Mucosa of descending colon (tissue), 3 donors: ENCODE measurements at regions of chr14 and their contacts with region 1.

Region 1: GRCh38 chr14:75147423-75148071 is 20.7 kb upstream of the NEK9 start:
- DNase-seq: peak in 2 of 3 donors; percentile 63 to 65
- ATAC-seq: peak; percentile 63
- H3K4me3 ChIP-seq: no peak overlapping the region
- H3K4me1 ChIP-seq: peaks cover 5% of the 10 kb centered on the region
- CTCF ChIP-seq: peak; percentile 7

Region 2: GRCh38 chr14:75182841-75183624 is 35.5 kb after region 1 on chr14:
- intact Hi-C with region 1: no loop called
- DNase-seq: no peak
- ATAC-seq: no peak
- H3K4me3 ChIP-seq: no peak overlapping the region
- H3K4me1 ChIP-seq: peaks cover 18% of the 10 kb centered on the region
- CTCF ChIP-seq: no peak

Region 3: GRCh38 chr14:75487155-75487671 is 339.7 kb after region 1 on chr14:
- intact Hi-C with region 1: loop called in 1 of 2 experiments (anchors 10 kb)
- DNase-seq: no peak
- ATAC-seq: peak; percentile 51
- H3K4me3 ChIP-seq: no peak overlapping the region
- H3K4me1 ChIP-seq: no peaks in the 10 kb centered on the region
- CTCF ChIP-seq: no peak